MCF 10A (cell line): ENCODE measurements at regions of chr7 and their contacts with region 1.

Region 1: GRCh38 chr7:111486472-111487142 is 75.7 kb downstream of the IMMP2L start:
- DNase-seq: peak; percentile 64
- H3K4me3 Mint-ChIP-seq: no peak overlapping the region
- H3K27ac Mint-ChIP-seq: no peak overlapping the region
- H3K4me1 Mint-ChIP-seq: no peaks in the 10 kb centered on the region
- H3K27me3 Mint-ChIP-seq: no peaks in the 10 kb centered on the region
- CTCF ChIP-seq: peak; percentile 64

Region 2: GRCh38 chr7:111089822-111090426 is 396.7 kb before region 1 on chr7:
- CTCF ChIA-PET with region 1: interaction called, 6 read pairs
- POLR2A ChIA-PET with region 1: no interaction called
- intact Hi-C with region 1: loop called (anchors 1 kb)
- DNase-seq: peak; percentile 48
- H3K4me3 Mint-ChIP-seq: no peak overlapping the region
- H3K27ac Mint-ChIP-seq: no peak overlapping the region
- H3K4me1 Mint-ChIP-seq: no peaks in the 10 kb centered on the region
- H3K27me3 Mint-ChIP-seq: no peaks in the 10 kb centered on the region
- CTCF ChIP-seq: peak; percentile 55

Region 3: DNA sequence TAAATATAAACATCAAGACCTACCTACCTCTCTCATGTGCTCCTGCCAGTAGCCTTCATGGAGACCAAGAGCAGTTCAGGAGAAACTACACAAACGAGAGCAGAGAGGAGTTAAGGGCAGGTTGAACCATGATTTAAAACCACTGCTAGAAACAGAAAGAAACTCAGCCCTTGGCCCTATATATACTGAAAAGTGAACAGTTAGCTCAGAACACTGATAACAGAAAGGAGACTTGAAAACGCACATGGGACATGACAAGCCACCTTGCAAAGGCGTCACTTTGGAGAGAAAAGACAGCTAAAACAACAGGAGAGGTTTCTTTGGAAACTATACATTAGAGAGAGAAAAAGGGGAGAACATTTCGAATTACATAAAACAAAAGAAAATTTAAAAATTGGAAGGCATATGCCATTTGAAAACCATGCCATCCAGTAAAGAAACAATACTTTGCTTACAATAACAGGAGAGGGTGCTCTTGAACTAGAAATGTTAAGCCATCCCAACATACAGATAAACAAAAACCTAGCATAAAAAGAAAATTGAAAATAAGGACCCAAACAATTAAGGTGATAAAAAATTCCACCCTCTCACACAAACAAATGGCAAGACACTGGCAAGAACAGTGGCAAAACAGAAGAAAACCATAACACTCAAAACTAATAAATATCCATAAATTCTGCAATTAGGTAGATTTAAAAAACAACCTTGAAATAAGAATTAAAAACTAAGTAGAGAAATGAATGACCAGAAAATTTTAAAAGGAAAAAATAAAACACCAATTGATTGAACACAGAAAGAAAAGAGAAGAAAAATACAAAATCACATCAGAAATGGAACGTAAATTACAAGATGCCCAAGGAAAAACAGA is 157.0 kb before region 1 on chr7:
- CTCF ChIA-PET with region 1: interaction called, 6 read pairs
- POLR2A ChIA-PET with region 1: no interaction called
- intact Hi-C with region 1: loop called (anchors 1 kb)
- DNase-seq: peak; percentile 13
- H3K4me3 Mint-ChIP-seq: no peak overlapping the region
- H3K27ac Mint-ChIP-seq: no peak overlapping the region
- H3K4me1 Mint-ChIP-seq: no peaks in the 10 kb centered on the region
- H3K27me3 Mint-ChIP-seq: no peaks in the 10 kb centered on the region
- CTCF ChIP-seq: peak; percentile 30